HepG2 (cell line): ENCODE measurements at regions of chr9 and their contacts with region 1.

Region 1: DNA sequence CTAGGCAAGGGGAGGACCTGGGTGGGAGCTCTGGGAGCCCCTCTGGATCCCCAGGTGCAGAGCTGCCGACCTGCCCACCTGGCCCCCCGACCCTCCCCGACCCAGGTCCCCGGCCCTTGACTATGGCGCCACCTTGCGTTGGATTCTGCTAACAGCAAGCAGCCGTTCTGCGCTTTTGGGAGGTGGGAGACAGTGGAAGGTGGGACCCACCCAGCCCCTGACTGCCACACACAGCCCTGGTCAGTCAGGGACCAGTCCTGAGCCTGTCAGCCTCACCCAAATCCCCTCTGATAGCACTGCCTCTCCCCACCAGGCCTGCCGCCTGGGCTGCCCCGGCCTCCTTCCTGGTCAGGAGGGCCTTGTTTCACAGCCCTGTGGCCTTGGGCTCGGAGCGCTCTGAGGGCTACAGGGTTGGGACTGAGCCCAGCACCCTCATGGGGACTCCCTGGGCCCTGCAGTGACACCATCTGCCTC is 77.9 kb downstream of the HMCN2 start:
- DNase-seq: no peak
- ATAC-seq: peak; percentile 40
- H3K4me3 ChIP-seq: no peak overlapping the region
- H3K27ac ChIP-seq: no peak overlapping the region
- H3K4me1 ChIP-seq: no peaks in the 10 kb centered on the region
- H3K27me3 ChIP-seq: peaks cover 0 to 1% of the 10 kb centered on the region in 2 experiments; a peak in 2 of 5 replicates
- CTCF ChIP-seq: peak; percentile 84
- EP300 ChIP-seq: no peak
- POLR2A ChIP-seq: no peak
- RAD21 ChIP-seq: peak; percentile 81

Region 2: DNA sequence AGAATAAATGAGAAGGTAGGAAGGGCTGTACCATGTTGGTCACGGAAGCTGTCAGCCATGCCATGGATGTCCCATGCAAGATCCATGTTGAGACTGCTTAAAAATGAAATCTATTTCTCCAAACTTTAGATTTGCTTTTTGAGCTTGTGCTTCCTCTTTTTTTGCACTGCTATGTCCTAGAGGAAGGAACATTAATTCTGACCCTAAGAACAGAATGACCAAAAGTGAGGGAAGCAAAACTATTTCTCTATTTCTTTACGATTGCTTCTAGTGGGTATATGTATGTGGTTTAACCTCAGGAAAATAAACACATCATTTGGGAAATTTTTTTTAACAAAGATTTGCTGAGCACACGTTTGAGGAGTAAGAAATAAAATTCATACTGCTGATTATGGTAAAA is 423.6 kb before region 1 on chr9:
- CTCF ChIA-PET with region 1: no interaction called
- POLR2A ChIA-PET with region 1: no interaction called
- in situ Hi-C with region 1: no loop called
- intact Hi-C with region 1: no loop called
- DNase-seq: no peak
- ATAC-seq: no peak
- H3K4me3 ChIP-seq: no peak overlapping the region
- H3K27ac ChIP-seq: no peak overlapping the region
- H3K4me1 ChIP-seq: no peaks in the 10 kb centered on the region
- H3K27me3 ChIP-seq: no peaks in the 10 kb centered on the region
- CTCF ChIP-seq: no peak
- EP300 ChIP-seq: no peak
- POLR2A ChIP-seq: no peak
- RAD21 ChIP-seq: no peak

Region 3: DNA sequence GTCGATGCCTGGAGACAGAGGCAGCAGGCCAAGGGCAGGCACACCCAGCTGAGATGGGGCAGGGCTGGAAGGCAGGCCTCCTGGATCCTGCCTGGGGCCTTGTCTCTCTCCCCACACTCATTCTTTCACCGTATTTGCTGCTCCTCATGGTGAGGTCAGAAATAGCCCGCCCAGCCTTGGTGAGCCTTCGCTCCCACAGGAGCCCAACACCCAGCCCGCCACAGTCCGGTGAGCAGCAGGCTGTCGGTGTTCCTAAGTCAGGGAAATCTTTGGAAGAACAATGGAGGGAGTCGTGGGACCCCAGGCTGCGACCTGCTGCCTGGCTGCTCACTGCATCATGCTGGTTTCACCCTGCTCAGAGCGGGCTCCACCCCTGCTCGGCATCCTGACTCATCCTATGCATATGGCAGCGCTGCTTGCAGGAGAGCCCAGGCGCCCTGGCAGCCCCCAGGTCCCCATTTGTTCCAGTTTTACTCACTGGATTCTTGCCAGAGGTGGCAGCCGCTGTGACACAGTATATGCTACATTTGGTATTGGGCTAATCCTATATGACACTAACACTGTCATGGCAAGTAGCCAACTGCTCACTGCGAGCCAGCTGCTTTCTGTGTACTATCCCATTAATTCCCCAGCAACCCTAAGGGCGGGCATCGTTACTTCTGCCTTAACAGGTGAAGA is 224.5 kb before region 1 on chr9:
- CTCF ChIA-PET with region 1: no interaction called
- POLR2A ChIA-PET with region 1: no interaction called
- in situ Hi-C with region 1: loop called (anchors 10 kb)
- intact Hi-C with region 1: no loop called
- DNase-seq: no peak
- ATAC-seq: no peak; the same call in 2 of the 3 replicates
- H3K4me3 ChIP-seq: no peak overlapping the region
- H3K27ac ChIP-seq: no peak overlapping the region
- H3K4me1 ChIP-seq: no peaks in the 10 kb centered on the region
- H3K27me3 ChIP-seq: no peaks in the 10 kb centered on the region
- CTCF ChIP-seq: no peak
- EP300 ChIP-seq: no peak
- POLR2A ChIP-seq: no peak
- RAD21 ChIP-seq: no peak

Region 4: DNA sequence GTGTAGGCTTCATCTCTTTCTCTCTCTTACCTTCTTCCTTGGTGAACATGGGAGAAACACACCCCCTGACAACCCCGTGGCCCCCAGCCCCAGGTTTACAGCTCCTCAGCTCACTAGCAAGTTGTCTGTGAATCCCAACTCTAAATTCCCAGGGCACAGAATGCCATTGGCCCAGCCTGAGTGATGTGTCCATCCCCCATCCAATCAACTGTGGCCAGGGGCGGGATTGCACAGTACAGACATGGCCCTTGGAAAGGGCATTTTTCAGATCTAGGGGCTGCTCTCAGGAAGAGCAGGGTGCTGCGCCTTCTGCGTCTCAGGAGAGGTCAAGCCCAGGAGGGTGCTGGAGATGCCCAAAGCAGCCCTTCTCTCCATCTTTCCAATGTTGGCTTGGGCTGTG is 53.1 kb after region 1 on chr9:
- CTCF ChIA-PET with region 1: no interaction called
- POLR2A ChIA-PET with region 1: no interaction called
- in situ Hi-C with region 1: no loop called
- intact Hi-C with region 1: no loop called
- DNase-seq: no peak
- ATAC-seq: no peak; the same call in 2 of the 3 replicates
- H3K4me3 ChIP-seq: no peak overlapping the region
- H3K27ac ChIP-seq: no peak overlapping the region
- H3K4me1 ChIP-seq: no peaks in the 10 kb centered on the region
- H3K27me3 ChIP-seq: peaks cover 3 to 19% of the 10 kb centered on the region in 2 experiments; a peak in 4 of 5 replicates
- CTCF ChIP-seq: no peak
- EP300 ChIP-seq: no peak
- POLR2A ChIP-seq: no peak
- RAD21 ChIP-seq: no peak